HEK293 (cell line): ENCODE measurements at regions of chr7 and their contacts with region 1.

Region 1: DNA sequence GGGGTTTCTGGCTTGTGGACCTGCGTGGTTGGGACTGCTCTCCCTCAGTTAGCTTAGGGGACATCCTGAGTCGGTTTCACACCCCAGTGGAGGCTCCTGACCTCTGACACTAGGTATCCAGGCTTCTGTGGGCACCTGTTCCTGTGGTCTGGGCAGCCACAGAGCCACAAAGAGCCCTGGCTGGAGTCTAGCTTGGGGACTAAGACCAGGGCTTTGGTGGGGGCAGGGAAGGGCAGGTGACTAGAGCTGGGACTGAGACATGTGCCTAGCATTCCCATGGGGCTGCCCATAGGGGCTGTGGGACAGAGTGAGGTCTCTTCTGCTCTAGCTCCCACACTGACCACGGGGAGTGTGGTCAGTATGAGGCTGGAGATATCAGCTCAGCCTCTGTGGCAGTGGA is 4.0 kb upstream of the TMEM270 start:
- H3K4me3 ChIP-seq: no peak overlapping the region
- H3K27ac ChIP-seq: no peak overlapping the region
- H3K4me1 ChIP-seq: peaks cover 3% of the 10 kb centered on the region
- CTCF ChIP-seq: no peak

Region 2: DNA sequence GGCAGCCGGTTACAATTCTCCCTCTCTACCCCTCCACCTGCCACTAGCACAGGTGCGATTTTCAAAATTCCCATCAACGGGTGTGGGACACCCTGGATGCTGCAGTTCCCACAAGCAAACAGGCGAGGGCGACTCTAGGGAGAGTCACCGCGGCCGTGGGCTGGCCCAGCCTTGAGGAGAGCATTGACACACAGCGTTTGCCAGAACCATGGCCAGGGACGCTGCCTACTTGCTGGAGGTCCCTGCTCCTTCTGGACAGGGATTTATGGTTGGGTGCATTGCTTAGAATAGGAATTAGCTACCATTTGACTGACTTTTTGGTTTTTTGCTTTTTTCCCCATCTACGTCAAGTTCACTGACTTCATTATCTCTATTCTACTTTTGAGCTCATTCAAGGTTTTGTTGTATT is 45.2 kb before region 1 on chr7:
- CTCF ChIA-PET with region 1: interaction called, 40 read pairs
- POLR2A ChIA-PET with region 1: no interaction called
- H3K4me3 ChIP-seq: no peak overlapping the region
- H3K27ac ChIP-seq: no peak overlapping the region
- H3K4me1 ChIP-seq: no peaks in the 10 kb centered on the region
- CTCF ChIP-seq: no peak

Region 3: DNA sequence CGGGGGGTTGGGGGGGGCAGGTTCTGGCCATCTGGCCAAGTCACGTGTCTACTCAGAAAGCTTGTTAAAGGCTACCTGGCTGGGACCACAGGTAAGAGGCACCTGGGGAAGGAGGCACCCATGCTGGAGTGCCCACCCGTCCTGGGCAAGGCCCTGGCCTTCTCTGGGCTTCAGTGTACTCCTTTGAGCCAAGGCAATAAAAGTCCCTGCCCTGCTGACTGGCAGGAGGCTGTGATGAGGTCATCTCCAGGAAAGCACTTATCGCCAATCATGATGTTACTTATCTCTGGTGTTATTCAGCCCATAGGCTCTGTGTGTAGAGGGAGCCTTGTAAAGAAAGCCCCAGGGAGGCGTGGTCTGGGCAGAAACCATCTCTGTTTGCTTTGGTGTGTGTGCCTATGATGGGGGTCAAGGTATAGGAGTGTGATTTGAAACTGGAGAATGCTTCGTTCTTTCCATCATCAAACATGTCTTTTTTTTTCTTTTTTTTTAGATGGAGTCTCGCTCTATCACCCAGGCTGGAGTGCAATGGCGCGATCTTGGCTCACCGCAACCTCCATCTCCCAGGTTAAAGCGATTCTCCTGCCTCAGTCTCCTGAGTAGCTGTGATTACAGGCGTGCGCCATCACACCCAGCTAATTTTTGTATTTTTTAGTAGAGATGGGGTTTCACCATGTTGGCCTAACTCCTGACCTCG is 28.7 kb before region 1 on chr7:
- CTCF ChIA-PET with region 1: interaction called, 29 read pairs
- POLR2A ChIA-PET with region 1: no interaction called
- H3K4me3 ChIP-seq: peak overlapping the region; percentile 18; the same call in 1 of the 2 replicates
- H3K27ac ChIP-seq: peak overlapping the region; percentile 85
- H3K4me1 ChIP-seq: peaks cover 14% of the 10 kb centered on the region
- CTCF ChIP-seq: no peak

Region 4: GRCh38 chr7:73909051-73909941 is 52.4 kb after region 1 on chr7:
- CTCF ChIA-PET with region 1: no interaction called
- POLR2A ChIA-PET with region 1: no interaction called
- H3K4me3 ChIP-seq: no peak overlapping the region
- H3K27ac ChIP-seq: no peak overlapping the region
- H3K4me1 ChIP-seq: no peaks in the 10 kb centered on the region
- CTCF ChIP-seq: no peak

Region 5: GRCh38 chr7:73971704-73972341 is 114.9 kb after region 1 on chr7:
- CTCF ChIA-PET with region 1: no interaction called
- POLR2A ChIA-PET with region 1: no interaction called
- H3K4me3 ChIP-seq: no peak overlapping the region
- H3K27ac ChIP-seq: no peak overlapping the region
- H3K4me1 ChIP-seq: no peaks in the 10 kb centered on the region
- CTCF ChIP-seq: no peak